Left ventricle myocardium inferior (tissue), 1 donor: ENCODE measurements at regions of chr19 and their contacts with region 1.

Region 1: GRCh38 chr19:8654591-8655339 is 24.3 kb downstream of the NFILZ start:
- DNase-seq: peak; percentile 41
- H3K4me3 ChIP-seq: peak overlapping the region; percentile 39
- H3K27ac ChIP-seq: no peak overlapping the region
- H3K4me1 ChIP-seq: no peaks in the 10 kb centered on the region
- H3K27me3 ChIP-seq: peaks cover 65% of the 10 kb centered on the region
- CTCF ChIP-seq: peak; percentile 99

Region 2: GRCh38 chr19:8505680-8506401 is 148.9 kb before region 1 on chr19:
- intact Hi-C with region 1: no loop called
- DNase-seq: peak; percentile 85
- H3K4me3 ChIP-seq: peak overlapping the region; percentile 71
- H3K27ac ChIP-seq: peak overlapping the region; percentile 38
- H3K4me1 ChIP-seq: peaks cover 17% of the 10 kb centered on the region
- H3K27me3 ChIP-seq: no peaks in the 10 kb centered on the region
- CTCF ChIP-seq: peak; percentile 92

Region 3: GRCh38 chr19:8557642-8558238 is 97.0 kb before region 1 on chr19:
- intact Hi-C with region 1: no loop called
- DNase-seq: no peak
- H3K4me3 ChIP-seq: no peak overlapping the region
- H3K27ac ChIP-seq: no peak overlapping the region
- H3K4me1 ChIP-seq: no peaks in the 10 kb centered on the region
- H3K27me3 ChIP-seq: no peaks in the 10 kb centered on the region
- CTCF ChIP-seq: no peak

Region 4: GRCh38 chr19:9075064-9075949 is 420.5 kb after region 1 on chr19:
- intact Hi-C with region 1: loop called (anchors 5 kb)
- DNase-seq: peak; percentile 33
- H3K4me3 ChIP-seq: no peak overlapping the region
- H3K27ac ChIP-seq: no peak overlapping the region
- H3K4me1 ChIP-seq: peaks cover 10% of the 10 kb centered on the region
- H3K27me3 ChIP-seq: no peaks in the 10 kb centered on the region
- CTCF ChIP-seq: no peak